ENCODE measurements at regions of chr7 and their contacts with region 1.

Region 1: GRCh38 chr7:99408379-99409191 is at the starts of genes BUD31 and PDAP1:
- DNase-seq: peak; percentile 96
- ATAC-seq: peak; percentile 83 to 88
- H3K4me3 ChIP-seq: peak within 1 kb of the TSS; percentile 99
- H3K27ac ChIP-seq: peak within 1 kb of the TSS; percentile 97 to 98
- H3K4me1 ChIP-seq: peaks cover 34% of the 10 kb centered on the region
- CTCF ChIP-seq: no peak
- EP300 ChIP-seq: no peak
- POLR2A ChIP-seq: peak; percentile 86
- RAD21 ChIP-seq: no peak
- polyA plus RNA-seq, gene BUD31: 81.7 and 96.5 TPM in 2 replicates
- polyA plus RNA-seq, gene PDAP1: 42.4 and 81.8 TPM in 2 replicates

Region 2: GRCh38 chr7:99362801-99363200 is 45.8 kb before region 1 on chr7:
- CTCF ChIA-PET with region 1: no interaction called
- POLR2A ChIA-PET with region 1: no interaction called
- DNase-seq: no peak
- ATAC-seq: no peak
- H3K4me3 ChIP-seq: no peak overlapping the region
- H3K27ac ChIP-seq: no peak overlapping the region
- H3K4me1 ChIP-seq: no peaks in the 10 kb centered on the region
- CTCF ChIP-seq: no peak
- EP300 ChIP-seq: no peak
- POLR2A ChIP-seq: no peak
- RAD21 ChIP-seq: no peak

Region 3: DNA sequence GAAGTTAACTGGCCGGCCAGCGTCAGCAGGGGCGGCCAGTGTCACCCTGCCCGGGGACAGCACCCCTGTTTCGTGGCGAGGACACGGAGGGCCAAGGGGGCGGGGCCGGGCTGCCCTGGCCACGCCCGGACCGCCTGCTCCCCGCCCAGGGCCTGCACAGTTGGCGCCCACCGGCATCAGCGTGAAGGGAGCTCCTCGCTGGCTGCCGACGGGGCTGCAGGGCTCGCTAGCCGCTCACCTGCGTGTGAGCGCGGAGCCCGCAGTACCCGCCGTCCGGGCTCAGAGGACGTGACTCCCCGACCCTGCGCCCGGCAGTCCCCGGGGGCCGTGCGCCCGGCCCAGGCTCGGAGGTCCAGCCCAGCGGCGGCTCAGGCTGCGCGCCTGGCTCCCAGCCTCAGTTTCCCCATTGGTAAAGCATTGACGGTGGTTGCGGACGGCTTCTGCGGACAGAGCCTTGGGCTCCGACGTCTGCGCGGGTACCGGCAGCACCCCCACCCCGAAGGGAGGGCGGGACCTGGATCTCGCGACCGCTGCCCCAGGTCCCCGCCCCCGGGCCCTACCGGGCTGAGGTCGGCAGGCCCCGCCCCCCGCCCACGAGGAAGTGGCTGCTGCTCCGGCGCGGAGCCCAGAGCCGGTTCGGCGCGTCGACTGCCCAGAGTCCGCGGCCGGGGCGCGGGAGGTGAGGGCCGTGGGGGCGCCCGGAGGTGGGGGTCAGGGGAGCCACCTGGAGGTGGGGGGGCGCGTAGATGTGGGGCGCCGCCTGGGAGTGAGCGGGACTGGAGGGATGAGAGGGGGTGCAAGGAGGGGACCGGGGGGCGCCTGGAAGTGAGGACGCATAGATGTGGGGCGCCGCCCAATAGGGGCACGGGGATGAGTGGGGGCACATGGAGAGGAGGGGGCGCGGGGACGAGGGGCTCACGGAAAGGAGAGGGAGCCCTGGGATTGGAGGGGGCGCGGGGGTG is 34.2 kb before region 1 on chr7 and contains the start of gene ARPC1B:
- CTCF ChIA-PET with region 1: no interaction called
- POLR2A ChIA-PET with region 1: interaction called, 15 read pairs
- DNase-seq: peak; percentile 78 to 91
- ATAC-seq: peak; percentile 85 to 87
- H3K4me3 ChIP-seq: peak within 1 kb of the TSS; percentile 96
- H3K27ac ChIP-seq: peak within 1 kb of the TSS; percentile 95 to 98
- H3K4me1 ChIP-seq: peaks cover 39% of the 10 kb centered on the region
- CTCF ChIP-seq: no peak
- EP300 ChIP-seq: no peak
- POLR2A ChIP-seq: peak; percentile 86
- RAD21 ChIP-seq: no peak
- polyA plus RNA-seq, gene ARPC1B: 141 and 197 TPM in 2 replicates

Region 4: GRCh38 chr7:99422186-99422585 is 13.6 kb after region 1 on chr7:
- CTCF ChIA-PET with region 1: interaction called, 21 read pairs
- POLR2A ChIA-PET with region 1: interaction called, 12 read pairs
- DNase-seq: no peak
- ATAC-seq: peak in 1 of 2 experiments; percentile 9; a peak in 2 of 6 replicates
- H3K4me3 ChIP-seq: no peak overlapping the region
- H3K27ac ChIP-seq: no peak overlapping the region
- H3K4me1 ChIP-seq: no peaks in the 10 kb centered on the region
- CTCF ChIP-seq: no peak
- EP300 ChIP-seq: no peak
- POLR2A ChIP-seq: no peak
- RAD21 ChIP-seq: no peak

Region 5: DNA sequence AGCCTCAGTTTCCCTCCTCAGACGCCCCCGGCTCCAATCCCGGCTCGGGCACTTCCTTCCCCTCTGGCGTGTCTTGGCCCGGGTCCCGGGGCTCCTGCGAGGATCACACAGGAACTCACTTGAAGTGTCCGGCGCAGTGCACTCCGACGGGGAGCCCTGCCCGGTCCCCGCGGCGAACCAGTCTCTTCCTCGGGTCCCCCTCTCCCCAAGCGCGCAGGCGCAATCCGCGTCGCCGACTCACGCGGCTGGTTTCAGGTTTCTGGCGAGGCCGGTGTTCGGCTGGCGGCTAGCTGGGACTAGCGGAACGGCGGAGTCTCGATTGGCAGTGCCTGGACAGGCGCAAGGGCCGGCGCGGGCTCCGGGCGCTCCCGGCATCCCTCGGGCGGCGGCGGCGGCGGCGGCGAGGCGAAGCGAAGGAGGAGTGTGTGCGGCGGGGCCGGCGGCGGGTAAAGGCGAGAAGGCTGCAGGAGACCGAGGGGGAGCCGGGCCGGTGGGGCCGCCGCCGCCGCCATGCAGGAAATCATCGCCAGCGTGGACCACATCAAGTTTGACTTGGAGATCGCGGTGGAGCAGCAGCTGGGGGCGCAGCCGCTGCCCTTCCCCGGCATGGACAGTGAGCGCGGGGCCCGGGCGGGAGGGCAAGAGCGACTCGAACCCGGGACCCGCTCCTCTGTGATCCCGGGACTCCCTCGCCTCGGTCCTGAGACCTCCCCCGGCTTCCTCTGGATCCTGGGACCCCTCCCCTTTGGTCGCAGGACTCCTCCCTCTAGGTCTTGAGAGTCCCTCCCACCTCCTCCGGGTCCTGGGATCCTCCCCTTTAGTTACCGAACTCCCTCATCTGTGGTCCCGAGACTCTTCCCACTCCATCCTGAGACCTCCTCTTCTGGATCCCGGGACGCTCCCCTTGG is 30.2 kb after region 1 on chr7 and contains the starts of genes CPSF4 and PTCD1:
- CTCF ChIA-PET with region 1: no interaction called
- POLR2A ChIA-PET with region 1: interaction called, 16 read pairs
- DNase-seq: peak; percentile 93 to 98
- ATAC-seq: peak; percentile 95 to 96
- H3K4me3 ChIP-seq: peak within 1 kb of the TSS; percentile 86
- H3K27ac ChIP-seq: peak within 1 kb of the TSS; percentile 93 to 99
- H3K4me1 ChIP-seq: peaks cover 18% of the 10 kb centered on the region; the same call in 2 of the 3 replicates
- CTCF ChIP-seq: no peak
- EP300 ChIP-seq: no peak
- POLR2A ChIP-seq: peak; percentile 64
- RAD21 ChIP-seq: no peak
- polyA plus RNA-seq, gene CPSF4: 28.7 and 31.3 TPM in 2 replicates
- polyA plus RNA-seq, gene PTCD1: 3.9 and 5.1 TPM in 2 replicates